ENCODE measurements at regions of chr17 and their contacts with region 1.

Region 1: DNA sequence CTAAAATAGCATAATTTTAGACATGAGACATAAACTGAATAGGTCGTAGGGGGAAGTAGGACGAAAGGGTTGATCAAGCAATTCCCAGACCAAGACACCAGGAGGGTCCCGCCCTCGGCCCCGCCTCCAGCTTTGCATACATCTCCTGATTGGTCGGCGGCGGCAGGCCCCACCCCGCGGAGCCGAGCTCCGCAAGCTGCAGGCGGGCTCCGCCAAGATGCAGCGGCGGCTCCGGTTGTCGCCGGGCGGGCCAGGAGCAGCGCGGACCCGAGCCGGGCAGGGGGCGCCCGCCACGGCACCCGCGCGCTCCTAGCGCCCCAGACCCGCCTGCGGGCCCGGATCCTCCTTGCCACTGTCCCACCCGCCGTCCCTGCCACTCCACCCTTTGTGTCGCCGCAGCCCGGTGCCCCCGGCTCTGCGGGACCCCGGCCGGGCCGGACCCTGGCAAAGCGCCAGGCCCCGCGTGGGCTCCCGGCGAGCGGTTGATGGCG is at the start of gene CDR2L:
- DNase-seq: peak; percentile 98
- H3K4me3 Mint-ChIP-seq: peak within 1 kb of the TSS; percentile 93
- H3K27ac Mint-ChIP-seq: peak within 1 kb of the TSS; percentile 58
- H3K4me1 Mint-ChIP-seq: peaks cover 56% of the 10 kb centered on the region
- H3K27me3 Mint-ChIP-seq: no peaks in the 10 kb centered on the region
- CTCF ChIP-seq: no peak
- total RNA-seq, gene CDR2L: 39.4 and 48.3 TPM in 2 replicates

Region 2: GRCh38 chr17:74930535-74931036 is 56.9 kb before region 1 on chr17:
- CTCF ChIA-PET with region 1: no interaction called
- intact Hi-C with region 1: no loop called
- DNase-seq: no peak
- H3K4me3 Mint-ChIP-seq: no peak overlapping the region
- H3K27ac Mint-ChIP-seq: no peak overlapping the region
- H3K4me1 Mint-ChIP-seq: peaks cover 9% of the 10 kb centered on the region
- H3K27me3 Mint-ChIP-seq: peaks cover 90% of the 10 kb centered on the region
- CTCF ChIP-seq: no peak

Region 3: DNA sequence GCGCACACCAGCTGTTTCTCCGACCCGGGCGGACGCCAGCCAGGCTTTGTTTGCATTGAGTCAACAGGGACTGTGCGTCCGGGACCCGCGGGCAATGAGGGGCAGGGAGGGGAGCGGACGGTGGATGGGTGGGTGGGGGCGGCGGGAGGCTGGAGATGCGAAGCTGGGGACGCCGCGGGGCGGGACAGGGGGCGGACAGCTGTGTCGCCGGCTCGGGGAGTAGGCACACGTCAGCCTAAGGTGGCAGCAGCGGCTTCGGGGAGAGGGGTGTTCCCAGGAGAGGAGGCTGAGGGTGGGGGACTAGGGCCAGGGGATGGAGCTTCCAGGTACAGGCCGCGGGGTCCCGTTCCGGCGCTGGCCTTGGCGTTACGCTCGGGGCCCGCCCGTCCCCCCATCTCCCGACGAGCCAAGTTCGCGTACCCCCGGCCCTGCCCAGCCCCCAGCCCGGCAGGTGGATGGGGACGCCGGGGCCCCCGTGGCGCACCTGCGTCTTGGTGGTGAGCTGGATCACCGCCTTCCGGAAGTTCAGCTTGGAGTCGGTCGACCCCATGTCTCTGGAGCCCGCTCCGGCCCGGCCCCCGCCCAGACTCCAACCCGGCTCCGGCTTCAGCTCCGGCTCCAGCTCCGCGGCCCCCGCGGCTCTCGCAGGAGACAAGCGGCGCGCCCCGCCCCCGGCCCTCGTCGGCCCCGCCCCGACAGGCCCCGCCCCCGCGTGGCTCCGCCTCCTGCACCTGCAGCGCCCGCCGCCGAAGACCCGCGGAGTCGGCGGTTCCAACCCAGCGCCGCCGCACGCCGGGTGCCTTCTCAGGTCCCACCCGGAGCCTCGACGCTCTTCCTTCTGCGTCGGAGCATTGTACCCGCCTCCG is 15.1 kb before region 1 on chr17 and contains the start of gene HID1:
- CTCF ChIA-PET with region 1: interaction called, 18 read pairs
- intact Hi-C with region 1: no loop called
- DNase-seq: peak; percentile 86
- H3K4me3 Mint-ChIP-seq: peak within 1 kb of the TSS; percentile 72
- H3K27ac Mint-ChIP-seq: peak within 1 kb of the TSS; percentile 76
- H3K4me1 Mint-ChIP-seq: peaks cover 38% of the 10 kb centered on the region
- H3K27me3 Mint-ChIP-seq: no peaks in the 10 kb centered on the region
- CTCF ChIP-seq: no peak
- total RNA-seq, gene HID1: 114 and 122 TPM in 2 replicates

Region 4: DNA sequence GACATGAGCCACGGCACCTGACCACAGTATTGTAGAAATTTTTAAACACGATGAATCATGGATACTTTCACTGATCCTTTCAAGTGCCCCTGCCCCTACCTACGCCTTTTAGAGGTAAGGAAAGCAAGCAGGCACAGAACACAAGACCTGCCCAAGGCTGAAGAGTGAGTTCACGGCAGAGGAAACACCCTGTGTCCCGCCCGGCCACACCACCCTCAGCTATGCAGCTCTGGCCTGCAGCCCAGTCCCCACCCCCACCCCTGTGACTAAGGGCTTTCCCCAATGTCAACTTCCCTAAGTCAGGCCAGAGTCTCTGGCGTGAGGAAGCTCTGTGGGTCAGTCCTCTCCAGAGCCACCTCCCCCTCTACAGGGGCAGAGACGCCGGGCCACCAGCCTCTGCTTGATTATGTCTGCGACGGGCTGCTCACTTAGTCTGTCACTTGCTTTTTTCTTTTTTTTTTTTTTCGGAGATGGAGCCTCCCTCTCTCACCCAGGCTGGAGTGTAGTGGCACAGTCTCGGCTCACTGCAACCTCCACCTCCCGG is 108.7 kb after region 1 on chr17:
- CTCF ChIA-PET with region 1: no interaction called
- intact Hi-C with region 1: no loop called
- DNase-seq: peak; percentile 87
- H3K4me3 Mint-ChIP-seq: peak overlapping the region; percentile 78
- H3K27ac Mint-ChIP-seq: peak overlapping the region; percentile 89
- H3K4me1 Mint-ChIP-seq: peaks cover 29% of the 10 kb centered on the region
- H3K27me3 Mint-ChIP-seq: no peaks in the 10 kb centered on the region
- CTCF ChIP-seq: no peak